Naive thymus-derived CD4-positive, alpha-beta T cell (primary cell): ENCODE measurements at regions of chr4 and their contacts with region 1.

Region 1: GRCh38 chr4:70704331-70705145 is 16.2 kb downstream of the UTP3 start:
- DNase-seq: peak; percentile 30 to 63 (median 44)
- ATAC-seq: peak; percentile 67
- H3K4me3 ChIP-seq: peak overlapping the region; percentile 87
- H3K4me3 Mint-ChIP-seq: peak overlapping the region; percentile 82 to 95 (median 93)
- H3K27ac ChIP-seq: peak overlapping the region; percentile 88
- H3K27ac Mint-ChIP-seq: peak overlapping the region; percentile 74 to 98 (median 93)
- H3K4me1 ChIP-seq: peaks cover 12 to 18% of the 10 kb centered on the region in 2 donors
- H3K4me1 Mint-ChIP-seq: peaks cover 17 to 43% (median 33%) of the 10 kb centered on the region in 7 donors
- H3K27me3 ChIP-seq: no peaks in the 10 kb centered on the region
- H3K27me3 Mint-ChIP-seq: no peaks in the 10 kb centered on the region

Region 2: GRCh38 chr4:69830560-69831289 is 873.8 kb before region 1 on chr4:
- CTCF ChIA-PET with region 1: no interaction called
- POLR2A ChIA-PET with region 1: no interaction called
- intact Hi-C with region 1: loop called in 1 of 2 experiments (anchors 5 kb)
- DNase-seq: peak in 2 of 9 donors; percentile 10 to 17
- ATAC-seq: peak; percentile 33
- H3K4me3 ChIP-seq: no peak overlapping the region
- H3K4me3 Mint-ChIP-seq: peak overlapping the region in 9 of 10 donors; percentile 85 to 98 (median 94)
- H3K27ac ChIP-seq: no peak overlapping the region
- H3K27ac Mint-ChIP-seq: peak overlapping the region in 2 of 9 donors; percentile 66 to 97
- H3K4me1 ChIP-seq: peaks cover 0 to 8% of the 10 kb centered on the region in 2 donors
- H3K4me1 Mint-ChIP-seq: peaks cover 10 to 24% (median 16%) of the 10 kb centered on the region in 7 donors
- H3K27me3 ChIP-seq: no peaks in the 10 kb centered on the region
- H3K27me3 Mint-ChIP-seq: no peaks in the 10 kb centered on the region

Region 3: GRCh38 chr4:70721747-70722146 is 17.2 kb after region 1 on chr4 and contains the start of gene RUFY3:
- CTCF ChIA-PET with region 1: interaction called, 3 read pairs
- POLR2A ChIA-PET with region 1: interaction called, 20 read pairs
- intact Hi-C with region 1: loop called in 1 of 2 experiments (anchors 1 kb)
- DNase-seq: no peak
- ATAC-seq: peak; percentile 6
- H3K4me3 ChIP-seq: no peak within 1 kb of the TSS
- H3K4me3 Mint-ChIP-seq: peak within 1 kb of the TSS; percentile 29 to 64 (median 54)
- H3K27ac ChIP-seq: peak within 1 kb of the TSS; percentile 20
- H3K27ac Mint-ChIP-seq: peak within 1 kb of the TSS; percentile 23 to 84 (median 75)
- H3K4me1 ChIP-seq: peaks cover 4 to 19% of the 10 kb centered on the region in 2 donors
- H3K4me1 Mint-ChIP-seq: peaks cover 13 to 36% (median 23%) of the 10 kb centered on the region in 7 donors
- H3K27me3 ChIP-seq: no peaks in the 10 kb centered on the region
- H3K27me3 Mint-ChIP-seq: peaks cover 0 to 3% (median 0%) of the 10 kb centered on the region in 5 donors
- total RNA-seq, gene RUFY3: 17.3 to 41.2 (median 39.3) TPM

Region 4: GRCh38 chr4:70749313-70749712 is 44.8 kb after region 1 on chr4:
- CTCF ChIA-PET with region 1: no interaction called
- POLR2A ChIA-PET with region 1: no interaction called
- intact Hi-C with region 1: no loop called
- DNase-seq: no peak
- ATAC-seq: no peak
- H3K4me3 ChIP-seq: no peak overlapping the region
- H3K4me3 Mint-ChIP-seq: no peak overlapping the region
- H3K27ac ChIP-seq: no peak overlapping the region
- H3K27ac Mint-ChIP-seq: no peak overlapping the region
- H3K4me1 ChIP-seq: no peaks in the 10 kb centered on the region
- H3K4me1 Mint-ChIP-seq: peaks cover 0 to 17% (median 10%) of the 10 kb centered on the region in 7 donors
- H3K27me3 ChIP-seq: no peaks in the 10 kb centered on the region
- H3K27me3 Mint-ChIP-seq: peaks cover 0 to 4% (median 0%) of the 10 kb centered on the region in 5 donors

Region 5: DNA sequence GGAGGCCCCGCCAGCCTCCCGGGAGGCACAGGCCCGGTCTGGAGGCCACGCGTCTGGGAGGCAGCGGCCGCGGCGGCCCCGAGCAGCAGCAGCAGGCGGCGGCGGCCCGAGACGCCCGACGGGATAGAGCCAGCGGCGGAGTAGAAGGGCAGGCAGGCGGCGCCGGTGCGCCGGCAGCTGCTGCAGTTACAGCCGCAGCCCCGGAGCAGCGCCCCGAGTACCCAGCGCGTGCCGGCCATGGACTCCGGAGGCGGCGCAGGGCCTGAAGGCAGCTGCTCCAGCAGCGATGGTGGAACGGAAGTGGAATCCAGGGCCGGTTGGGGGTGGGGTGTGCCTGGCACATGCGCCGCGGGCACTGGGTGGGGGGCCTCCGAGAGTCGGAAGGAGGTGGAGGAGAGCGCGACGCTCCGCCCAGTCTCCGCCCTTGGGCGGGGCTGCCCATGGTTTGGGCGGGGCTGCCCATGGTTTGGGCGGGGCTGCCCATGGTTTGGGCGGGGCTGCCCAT is 135.1 kb after region 1 on chr4 and contains the start of gene GRSF1:
- CTCF ChIA-PET with region 1: no interaction called
- POLR2A ChIA-PET with region 1: interaction called, 43 read pairs
- intact Hi-C with region 1: loop called (anchors 1 to 2 kb)
- DNase-seq: peak; percentile 92 to 96 (median 95)
- ATAC-seq: peak; percentile 96
- H3K4me3 ChIP-seq: peak within 1 kb of the TSS; percentile 83
- H3K4me3 Mint-ChIP-seq: peak within 1 kb of the TSS; percentile 89 to 99 (median 97)
- H3K27ac ChIP-seq: peak within 1 kb of the TSS; percentile 88
- H3K27ac Mint-ChIP-seq: peak within 1 kb of the TSS; percentile 91 to 98 (median 96)
- H3K4me1 ChIP-seq: peaks cover 17 to 22% of the 10 kb centered on the region in 2 donors
- H3K4me1 Mint-ChIP-seq: peaks cover 8 to 40% (median 29%) of the 10 kb centered on the region in 7 donors
- H3K27me3 ChIP-seq: no peaks in the 10 kb centered on the region
- H3K27me3 Mint-ChIP-seq: no peaks in the 10 kb centered on the region
- total RNA-seq, gene GRSF1: 35.9 to 76.0 (median 48.0) TPM